ENCODE measurements at regions of chr11 and their contacts with region 1.

Region 1: GRCh38 chr11:6619004-6619745 is at the start of gene TPP1:
- DNase-seq: peak; percentile 96
- total RNA-seq, gene TPP1: 80.9 to 137 TPM

Region 2: GRCh38 chr11:6568191-6568918 is 50.8 kb before region 1 on chr11:
- intact Hi-C with region 1: no loop called
- DNase-seq: peak; percentile 76

Region 3: GRCh38 chr11:6655020-6655789 is 36.0 kb after region 1 on chr11:
- intact Hi-C with region 1: loop called in 1 of 2 experiments (anchors 5 kb)
- DNase-seq: no peak

Region 4: GRCh38 chr11:8309862-8310261 is 1690.7 kb after region 1 on chr11:
- intact Hi-C with region 1: no loop called
- DNase-seq: peak; percentile 25